A673 (cell line): ENCODE measurements at regions of chr11 and their contacts with region 1.

Region 1: GRCh38 chr11:62896049-62896448 is 15.4 kb downstream of the SLC3A2 start:
- DNase-seq: no peak
- H3K4me3 ChIP-seq: no peak overlapping the region
- H3K27ac ChIP-seq: no peak overlapping the region
- H3K4me1 ChIP-seq: no peaks in the 10 kb centered on the region
- H3K27me3 ChIP-seq: no peaks in the 10 kb centered on the region
- CTCF ChIP-seq: no peak

Region 2: GRCh38 chr11:62847767-62848314 is 48.2 kb before region 1 on chr11:
- CTCF ChIA-PET with region 1: no interaction called
- POLR2A ChIA-PET with region 1: interaction called, 13 read pairs
- intact Hi-C with region 1: no loop called
- DNase-seq: no peak
- H3K4me3 ChIP-seq: no peak overlapping the region
- H3K27ac ChIP-seq: no peak overlapping the region
- H3K4me1 ChIP-seq: peaks cover 6% of the 10 kb centered on the region
- H3K27me3 ChIP-seq: no peaks in the 10 kb centered on the region
- CTCF ChIP-seq: no peak